ENCODE measurements at regions of chr10 and their contacts with region 1.

Region 1: DNA sequence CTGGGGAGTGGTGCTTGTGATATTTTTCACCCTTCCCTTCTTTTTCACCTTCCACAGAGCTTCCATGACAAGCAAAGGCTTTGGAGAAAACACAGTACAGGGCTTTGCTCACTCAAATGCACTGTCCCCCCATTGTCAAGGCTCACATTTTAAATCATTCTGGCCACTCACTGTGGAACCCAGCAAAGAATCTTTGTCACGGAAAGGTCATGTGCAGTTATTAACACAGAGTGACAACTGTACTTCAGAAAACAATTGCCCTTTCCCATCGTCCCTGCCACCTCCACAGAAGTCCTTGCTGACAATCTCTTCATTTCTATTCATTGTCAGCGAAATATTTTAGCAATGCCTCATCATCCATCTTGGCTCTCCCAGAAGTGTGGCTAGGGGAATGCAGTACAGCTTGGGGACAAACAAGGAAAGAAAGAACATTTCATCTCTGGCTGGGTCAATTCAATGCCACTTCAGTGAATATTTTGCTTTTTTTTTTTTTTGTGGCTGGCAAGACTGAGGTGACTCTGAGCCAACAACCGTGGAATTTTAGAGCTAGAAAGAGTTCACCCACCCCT is 851.0 kb downstream of the KCNMA1 start:
- DNase-seq: no peak
- ATAC-seq: no peak

Region 2: GRCh38 chr10:76868098-76868977 is 81.8 kb after region 1 on chr10:
- intact Hi-C with region 1: no loop called
- DNase-seq: no peak
- ATAC-seq: peak; percentile 29

Region 3: GRCh38 chr10:76882245-76882644 is 95.7 kb after region 1 on chr10:
- intact Hi-C with region 1: loop called (anchors 10 kb)
- DNase-seq: peak; percentile 46
- ATAC-seq: no peak

Measured in Right ventricle myocardium superior (tissue), 1 donor.